ENCODE measurements at regions of chr1 and their contacts with region 1.

Region 1: DNA sequence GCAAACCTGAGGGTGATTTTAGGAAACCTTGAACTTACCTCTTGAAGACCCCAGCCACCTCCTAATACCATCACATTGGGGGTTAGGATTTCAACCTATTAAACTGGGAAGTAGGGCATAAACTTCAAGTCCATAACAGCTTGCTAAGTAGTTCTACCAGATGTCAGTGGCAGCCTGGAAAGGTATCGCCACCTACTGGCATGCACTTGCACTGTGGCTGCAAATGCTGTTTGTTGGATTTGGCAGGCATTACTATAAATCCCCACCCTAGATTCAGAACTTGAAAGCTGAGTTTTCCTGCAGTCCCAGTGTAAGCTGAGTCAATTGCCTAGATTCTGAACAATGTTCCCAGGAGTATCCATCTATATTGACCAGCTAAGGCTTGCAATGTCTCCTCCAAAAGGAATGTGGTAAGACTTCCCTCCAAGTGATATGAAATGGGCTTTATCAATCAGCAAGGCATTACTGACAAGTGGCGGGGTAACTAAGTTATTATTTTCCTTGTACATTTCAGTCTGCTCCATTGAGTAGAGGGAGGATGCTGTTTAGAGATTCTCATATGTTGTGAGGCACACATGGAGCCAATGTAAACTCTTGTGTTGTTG is 474.5 kb downstream of the PTPRC start:
- H3K4me3 Mint-ChIP-seq: no peak overlapping the region
- H3K27ac Mint-ChIP-seq: no peak overlapping the region
- H3K4me1 Mint-ChIP-seq: peaks cover 9% of the 10 kb centered on the region
- H3K27me3 Mint-ChIP-seq: no peaks in the 10 kb centered on the region

Region 2: DNA sequence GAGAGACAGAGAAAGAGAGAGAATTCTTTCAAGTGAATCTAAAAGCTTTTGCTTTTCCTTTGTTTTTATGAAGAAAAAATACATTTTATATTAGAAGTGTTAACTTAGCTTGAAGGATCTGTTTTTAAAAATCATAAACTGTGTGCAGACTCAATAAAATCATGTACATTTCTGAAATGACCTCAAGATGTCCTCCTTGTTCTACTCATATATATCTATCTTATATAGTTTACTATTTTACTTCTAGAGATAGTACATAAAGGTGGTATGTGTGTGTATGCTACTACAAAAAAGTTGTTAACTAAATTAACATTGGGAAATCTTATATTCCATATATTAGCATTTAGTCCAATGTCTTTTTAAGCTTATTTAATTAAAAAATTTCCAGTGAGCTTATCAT is 356.9 kb before region 1 on chr1:
- intact Hi-C with region 1: loop called (anchors 5 kb)
- H3K4me3 Mint-ChIP-seq: no peak overlapping the region
- H3K27ac Mint-ChIP-seq: no peak overlapping the region
- H3K4me1 Mint-ChIP-seq: peaks cover 22% of the 10 kb centered on the region
- H3K27me3 Mint-ChIP-seq: no peaks in the 10 kb centered on the region

Region 3: GRCh38 chr1:198880818-198881597 is 232.4 kb before region 1 on chr1:
- intact Hi-C with region 1: loop called (anchors 5 kb)
- H3K4me3 Mint-ChIP-seq: no peak overlapping the region
- H3K27ac Mint-ChIP-seq: no peak overlapping the region
- H3K4me1 Mint-ChIP-seq: peaks cover 12% of the 10 kb centered on the region
- H3K27me3 Mint-ChIP-seq: no peaks in the 10 kb centered on the region

Region 4: DNA sequence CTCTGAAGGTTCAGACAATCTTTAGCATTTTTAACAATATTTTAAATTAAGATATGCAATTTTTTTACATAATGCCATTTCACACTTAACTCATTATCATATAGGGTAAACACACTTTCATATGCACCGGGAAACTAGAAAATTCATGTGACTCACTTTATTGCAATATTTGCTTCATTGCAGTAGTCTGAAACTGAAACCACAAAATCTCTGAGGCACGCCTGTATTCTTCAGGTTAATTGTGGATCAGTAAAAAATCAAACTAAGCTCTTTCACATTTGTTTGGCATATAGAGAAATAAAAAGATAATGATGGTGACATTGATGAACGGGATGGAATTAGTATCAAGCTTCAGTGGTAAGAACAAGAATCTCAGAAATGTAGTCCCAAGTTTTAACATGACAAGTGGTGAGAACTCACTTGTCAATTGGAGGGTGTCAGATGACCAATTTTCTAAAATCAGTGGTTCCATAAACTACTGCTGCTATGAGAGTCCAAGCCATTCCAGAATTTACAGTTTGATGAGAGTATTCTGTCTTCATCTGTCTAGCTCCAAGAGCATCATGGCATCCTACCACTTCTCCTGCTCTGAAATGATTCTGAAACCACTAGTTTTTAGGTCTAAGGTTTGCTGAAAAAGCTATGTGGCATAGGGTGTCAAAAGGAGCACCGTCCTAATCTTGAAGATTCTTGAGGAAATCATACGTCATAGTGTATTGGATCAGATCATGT is 193.5 kb before region 1 on chr1:
- intact Hi-C with region 1: loop called (anchors 10 kb)
- H3K4me3 Mint-ChIP-seq: no peak overlapping the region
- H3K27ac Mint-ChIP-seq: peak overlapping the region; percentile 51
- H3K4me1 Mint-ChIP-seq: peaks cover 50% of the 10 kb centered on the region
- H3K27me3 Mint-ChIP-seq: no peaks in the 10 kb centered on the region